Vagina (tissue), 2 donors: ENCODE measurements at regions of chr2 and their contacts with region 1.

Region 1: DNA sequence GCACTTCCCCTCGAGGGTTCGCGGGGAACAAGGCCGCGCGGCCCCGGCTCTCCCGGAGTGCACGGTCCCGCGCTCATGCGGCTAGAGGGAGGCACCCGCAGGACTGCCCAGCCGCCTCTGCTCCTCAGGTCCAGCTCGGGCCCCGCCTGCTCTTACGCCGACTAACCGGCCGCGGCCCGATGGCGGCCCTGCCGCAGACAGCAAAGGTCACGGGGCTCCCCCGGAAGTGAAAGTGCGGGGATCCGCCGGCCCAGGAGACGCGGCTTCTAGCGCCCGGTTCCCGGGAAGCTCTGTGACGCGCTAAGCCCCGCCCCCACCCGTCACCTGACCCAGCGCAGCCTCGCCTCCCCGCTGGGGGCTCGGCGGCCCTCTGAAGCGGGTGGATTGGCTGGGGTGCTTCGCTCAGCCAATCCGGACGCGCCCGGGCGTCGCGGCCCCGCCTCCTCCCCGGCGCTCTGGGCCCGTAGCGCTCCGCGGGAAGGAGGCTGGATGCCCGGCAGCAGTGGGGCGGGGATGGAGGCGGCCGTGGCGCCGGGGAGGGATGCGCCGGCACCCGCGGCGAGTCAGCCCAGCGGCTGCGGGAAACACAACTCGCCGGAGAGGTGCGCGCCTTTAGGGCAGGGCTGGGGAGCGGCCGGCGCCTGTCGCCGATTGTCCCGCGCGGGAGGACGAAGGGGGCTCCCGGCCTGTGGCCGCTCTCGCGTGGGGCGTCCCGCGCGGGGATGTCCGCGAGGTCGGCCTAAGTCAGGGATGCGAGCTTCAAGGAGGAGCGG is at the start of gene SCLY:
- DNase-seq: peak in 1 of 2 donors; percentile 98
- H3K4me3 ChIP-seq: peak within 1 kb of the TSS; percentile 80 to 84
- H3K27ac ChIP-seq: peak within 1 kb of the TSS; percentile 75
- H3K4me1 ChIP-seq: peaks cover 20% of the 10 kb centered on the region
- H3K27me3 ChIP-seq: no peaks in the 10 kb centered on the region
- CTCF ChIP-seq: peak in 1 of 3 experiments; percentile 21
- POLR2A ChIP-seq: peak in 1 of 2 donors; percentile 56
- total RNA-seq, gene SCLY: 13.5 TPM

Region 2: GRCh38 chr2:238003234-238004031 is 57.3 kb before region 1 on chr2:
- intact Hi-C with region 1: no loop called
- DNase-seq: no peak
- H3K4me3 ChIP-seq: no peak overlapping the region
- H3K27ac ChIP-seq: no peak overlapping the region
- H3K4me1 ChIP-seq: peaks cover 3% of the 10 kb centered on the region
- H3K27me3 ChIP-seq: no peaks in the 10 kb centered on the region
- CTCF ChIP-seq: no peak
- POLR2A ChIP-seq: no peak

Region 3: GRCh38 chr2:238239872-238240751 is 179.4 kb after region 1 on chr2 and contains the start of gene HES6:
- intact Hi-C with region 1: loop called (anchors 10 kb)
- DNase-seq: no peak
- H3K4me3 ChIP-seq: peak within 1 kb of the TSS; percentile 54 to 83
- H3K27ac ChIP-seq: no peak within 1 kb of the TSS
- H3K4me1 ChIP-seq: peaks cover 14% of the 10 kb centered on the region
- H3K27me3 ChIP-seq: no peaks in the 10 kb centered on the region
- CTCF ChIP-seq: no peak
- POLR2A ChIP-seq: peak in 1 of 2 donors; percentile 69
- total RNA-seq, gene HES6: 8.6 TPM